ENCODE measurements at regions of chr14 and their contacts with region 1.

Region 1: GRCh38 chr14:61296719-61297502 is 15.8 kb upstream of the TMEM30B start:
- DNase-seq: no peak
- ATAC-seq: peak; percentile 64
- H3K4me3 Mint-ChIP-seq: peak overlapping the region; percentile 56
- H3K27ac Mint-ChIP-seq: peak overlapping the region; percentile 79
- H3K4me1 Mint-ChIP-seq: peaks cover 53% of the 10 kb centered on the region
- H3K27me3 Mint-ChIP-seq: no peaks in the 10 kb centered on the region
- CTCF ChIP-seq: peak; percentile 81

Region 2: GRCh38 chr14:61280526-61281185 is 16.3 kb before region 1 on chr14:
- CTCF ChIA-PET with region 1: interaction called, 32 read pairs
- POLR2A ChIA-PET with region 1: interaction called, 4 read pairs
- intact Hi-C with region 1: no loop called
- DNase-seq: peak; percentile 81
- ATAC-seq: peak; percentile 88
- H3K4me3 Mint-ChIP-seq: peak overlapping the region; percentile 85
- H3K27ac Mint-ChIP-seq: peak overlapping the region; percentile 88
- H3K4me1 Mint-ChIP-seq: peaks cover 30% of the 10 kb centered on the region
- H3K27me3 Mint-ChIP-seq: peaks cover 2% of the 10 kb centered on the region
- CTCF ChIP-seq: peak; percentile 76

Region 3: DNA sequence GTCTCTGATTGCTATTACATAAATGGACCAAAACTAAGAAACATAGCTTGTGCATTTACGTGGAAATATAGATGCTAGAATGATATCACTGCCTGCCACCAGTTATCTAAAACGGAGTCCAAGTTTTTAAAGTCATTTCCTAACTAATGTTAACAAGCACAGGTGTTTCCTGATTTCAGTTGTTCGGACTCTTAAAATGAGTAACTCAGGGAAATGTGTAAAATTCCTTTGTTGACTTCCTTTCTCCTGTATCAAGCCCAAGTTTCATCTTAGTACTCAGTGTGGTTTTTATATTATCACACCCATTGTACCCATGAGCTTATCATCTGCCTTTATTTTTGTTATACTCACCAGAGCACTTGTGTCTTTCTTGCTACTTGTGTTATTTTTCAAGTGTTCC is 11.3 kb after region 1 on chr14:
- CTCF ChIA-PET with region 1: interaction called, 10 read pairs
- POLR2A ChIA-PET with region 1: no interaction called
- intact Hi-C with region 1: no loop called
- DNase-seq: no peak
- ATAC-seq: no peak
- H3K4me3 Mint-ChIP-seq: no peak overlapping the region
- H3K27ac Mint-ChIP-seq: no peak overlapping the region
- H3K4me1 Mint-ChIP-seq: peaks cover 20% of the 10 kb centered on the region
- H3K27me3 Mint-ChIP-seq: no peaks in the 10 kb centered on the region
- CTCF ChIP-seq: no peak

Region 4: DNA sequence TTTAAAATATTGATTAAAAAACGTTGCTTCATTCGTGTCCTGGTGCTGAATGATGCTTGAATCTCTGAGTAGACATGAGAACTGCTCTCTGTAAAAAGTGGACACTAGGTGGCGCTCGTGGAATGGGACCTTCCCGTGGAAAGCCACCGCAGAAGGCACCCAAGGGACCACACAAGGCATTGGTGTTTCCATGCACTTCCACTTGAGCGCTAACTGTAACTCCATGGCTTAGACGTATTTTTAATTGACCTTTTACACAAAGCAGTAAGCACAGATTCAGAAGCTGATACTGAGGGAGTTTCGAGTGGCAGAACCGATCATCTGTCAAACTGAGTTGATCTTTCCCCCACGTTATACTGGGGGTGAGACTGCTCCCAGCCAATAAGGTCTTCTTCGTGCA is 159.8 kb after region 1 on chr14:
- CTCF ChIA-PET with region 1: interaction called, 4 read pairs
- POLR2A ChIA-PET with region 1: no interaction called
- intact Hi-C with region 1: loop called (anchors 5 kb)
- DNase-seq: peak; percentile 92
- ATAC-seq: no peak
- H3K4me3 Mint-ChIP-seq: no peak overlapping the region
- H3K27ac Mint-ChIP-seq: peak overlapping the region; percentile 84
- H3K4me1 Mint-ChIP-seq: peaks cover 82% of the 10 kb centered on the region
- H3K27me3 Mint-ChIP-seq: no peaks in the 10 kb centered on the region
- CTCF ChIP-seq: peak; percentile 92